ENCODE measurements at regions of chr11 and their contacts with region 1.

Region 1: DNA sequence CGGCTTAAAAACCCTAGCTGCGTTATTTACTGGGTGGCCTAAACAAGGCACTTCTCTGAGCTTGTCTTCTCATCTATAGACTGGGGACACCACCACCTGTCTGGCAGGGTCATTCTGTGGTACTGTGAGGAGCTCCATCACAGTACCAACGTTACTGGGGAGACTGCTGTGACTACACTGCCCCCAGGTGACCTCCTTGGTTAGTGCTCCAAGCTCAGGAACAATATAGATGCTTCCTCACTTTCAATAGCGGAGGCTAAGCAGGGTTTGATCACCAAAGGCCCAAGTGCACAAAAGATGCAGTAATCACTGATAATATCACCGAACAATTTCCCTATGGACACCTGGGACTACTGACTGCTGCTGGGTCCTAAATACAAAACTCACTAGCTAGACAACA is 18.8 kb downstream of the PRPF19 start:
- DNase-seq: no peak

Region 2: DNA sequence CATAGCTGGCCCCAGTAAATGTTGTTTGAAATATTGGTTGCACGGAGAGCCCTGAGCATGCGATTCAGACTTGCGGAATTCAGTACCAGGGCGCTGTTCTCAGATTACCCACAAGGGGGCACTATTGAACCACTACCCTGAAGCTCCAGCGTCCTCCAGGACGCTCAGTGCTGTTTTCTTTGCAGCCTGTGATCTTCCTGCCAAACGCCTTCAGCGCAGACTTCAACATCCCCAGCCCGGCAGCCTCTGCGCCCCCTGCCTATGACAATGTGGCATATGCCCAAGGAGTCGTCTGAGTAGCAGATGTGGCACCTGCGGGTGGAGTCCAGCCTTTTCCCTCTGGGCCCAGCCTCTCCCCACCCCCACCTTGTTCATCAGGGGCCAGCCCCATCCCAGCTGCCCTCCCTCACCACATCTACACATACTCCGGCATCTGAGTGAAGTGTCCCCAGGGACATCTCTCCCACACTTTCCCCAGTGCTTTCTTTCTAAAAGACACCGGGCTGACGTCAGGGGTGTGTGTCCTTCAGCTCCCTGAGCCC is 112.1 kb before region 1 on chr11:
- intact Hi-C with region 1: loop called (anchors 5 kb)
- DNase-seq: no peak

Region 3: DNA sequence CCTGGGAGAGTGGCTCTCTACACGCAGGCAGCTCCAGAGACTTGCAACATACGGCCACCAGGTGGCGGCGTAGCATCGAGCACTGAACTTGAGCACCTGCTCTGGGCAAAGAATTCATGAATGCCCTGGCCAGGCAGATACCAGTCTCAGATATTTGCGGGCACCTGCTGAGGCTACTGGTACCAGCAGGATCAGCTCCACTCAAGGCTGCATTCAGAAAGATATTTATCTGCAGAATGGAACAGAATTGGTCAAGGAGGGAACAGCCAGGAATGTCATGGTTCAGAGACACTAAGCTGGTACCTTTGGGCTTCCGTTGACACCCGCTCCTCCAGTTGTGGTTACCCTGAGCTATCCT is 56.4 kb before region 1 on chr11:
- intact Hi-C with region 1: loop called (anchors 2 kb)
- DNase-seq: peak; percentile 91

Measured in cardiac septum (tissue), 1 donor.